ENCODE measurements at regions of chr10 and their contacts with region 1.

Region 1: DNA sequence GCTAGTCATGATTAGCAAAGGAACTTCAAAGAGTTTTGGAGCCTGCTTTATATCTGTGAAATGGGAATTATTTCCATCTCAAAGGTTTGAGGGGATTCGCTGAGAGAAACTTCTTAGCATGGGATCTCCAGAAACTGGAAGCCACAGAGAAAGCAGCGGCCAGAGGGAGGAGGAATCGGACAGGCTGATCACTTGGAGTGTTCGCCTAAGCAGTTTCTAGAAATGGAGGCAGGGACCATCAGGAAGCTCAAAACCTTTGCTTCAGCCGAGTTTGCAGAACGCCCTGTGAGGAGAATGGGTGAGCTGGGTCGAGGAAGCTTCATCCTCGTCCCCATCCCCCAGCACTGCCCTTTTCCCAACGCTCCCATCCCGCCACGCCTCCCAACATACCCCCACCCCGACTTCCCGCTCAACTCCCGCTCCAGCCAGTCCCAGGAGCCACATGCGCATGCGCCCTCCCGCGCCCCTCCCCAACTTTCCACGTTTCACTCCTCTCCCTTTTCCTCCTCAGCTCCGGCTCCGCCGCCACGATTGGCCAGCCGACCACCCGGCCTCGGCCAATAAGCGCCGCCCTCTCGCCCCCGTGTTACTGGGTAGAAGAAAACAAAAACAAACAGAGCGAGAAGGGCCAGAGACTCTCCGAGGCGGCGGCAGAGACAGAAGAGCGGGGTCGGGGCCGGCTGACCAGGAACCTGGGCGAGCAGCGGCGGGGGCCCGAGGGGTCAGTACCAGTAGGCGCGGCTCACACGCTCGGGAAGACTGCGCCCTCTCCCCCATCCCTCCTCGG is at the start of gene PDCD4:
- DNase-seq: peak; percentile 92
- ATAC-seq: peak; percentile 96
- H3K4me3 ChIP-seq: peak within 1 kb of the TSS; percentile 63 to 72
- H3K27ac ChIP-seq: peak within 1 kb of the TSS; percentile 99
- H3K4me1 ChIP-seq: peaks cover 16% of the 10 kb centered on the region
- H3K27me3 ChIP-seq: no peaks in the 10 kb centered on the region
- CTCF ChIP-seq: no peak
- total RNA-seq, gene PDCD4: 33.6 TPM

Region 2: GRCh38 chr10:110556969-110557601 is 314.4 kb before region 1 on chr10:
- CTCF ChIA-PET with region 1: no interaction called
- POLR2A ChIA-PET with region 1: no interaction called
- in situ Hi-C with region 1: no loop called
- intact Hi-C with region 1: no loop called
- DNase-seq: no peak
- ATAC-seq: peak; percentile 85
- H3K4me3 ChIP-seq: no peak overlapping the region
- H3K27ac ChIP-seq: no peak overlapping the region
- H3K4me1 ChIP-seq: no peaks in the 10 kb centered on the region
- H3K27me3 ChIP-seq: no peaks in the 10 kb centered on the region; the same call in 1 of the 2 replicates
- CTCF ChIP-seq: peak; percentile 89

Region 3: DNA sequence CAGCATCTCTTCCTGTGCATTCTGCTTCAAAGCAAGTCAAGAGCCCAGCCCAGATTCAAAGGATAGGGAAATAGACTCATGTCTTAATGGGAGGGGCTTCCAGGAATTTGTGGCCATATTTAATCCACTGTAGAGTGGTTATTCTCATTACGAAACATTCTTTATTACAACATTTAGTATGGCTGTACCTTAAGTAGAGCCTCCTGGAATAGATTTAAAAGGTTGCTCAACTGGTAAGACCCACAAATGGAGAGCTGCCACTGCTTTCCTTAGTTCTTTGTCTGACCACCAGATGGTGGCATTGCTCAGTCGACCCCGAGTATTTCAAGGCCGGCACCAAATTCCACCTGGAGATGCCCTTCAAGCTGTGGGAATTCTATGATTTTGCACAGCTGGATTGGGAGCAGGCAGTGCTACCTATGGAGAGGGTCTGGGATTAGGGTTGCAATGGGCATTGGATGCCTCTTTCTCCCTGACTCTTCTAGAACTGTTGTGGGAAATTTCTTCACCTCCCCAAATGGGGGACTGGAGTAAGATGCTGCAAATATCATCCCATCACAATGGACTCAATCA is 125.2 kb before region 1 on chr10:
- CTCF ChIA-PET with region 1: no interaction called
- POLR2A ChIA-PET with region 1: no interaction called
- in situ Hi-C with region 1: no loop called
- intact Hi-C with region 1: loop called (anchors 5 kb)
- DNase-seq: peak; percentile 72
- ATAC-seq: peak; percentile 93
- H3K4me3 ChIP-seq: no peak overlapping the region
- H3K27ac ChIP-seq: no peak overlapping the region
- H3K4me1 ChIP-seq: peaks cover 3% of the 10 kb centered on the region; the same call in 1 of the 2 replicates
- H3K27me3 ChIP-seq: peaks cover 7% of the 10 kb centered on the region; the same call in 1 of the 2 replicates
- CTCF ChIP-seq: peak; percentile 90

Region 4: DNA sequence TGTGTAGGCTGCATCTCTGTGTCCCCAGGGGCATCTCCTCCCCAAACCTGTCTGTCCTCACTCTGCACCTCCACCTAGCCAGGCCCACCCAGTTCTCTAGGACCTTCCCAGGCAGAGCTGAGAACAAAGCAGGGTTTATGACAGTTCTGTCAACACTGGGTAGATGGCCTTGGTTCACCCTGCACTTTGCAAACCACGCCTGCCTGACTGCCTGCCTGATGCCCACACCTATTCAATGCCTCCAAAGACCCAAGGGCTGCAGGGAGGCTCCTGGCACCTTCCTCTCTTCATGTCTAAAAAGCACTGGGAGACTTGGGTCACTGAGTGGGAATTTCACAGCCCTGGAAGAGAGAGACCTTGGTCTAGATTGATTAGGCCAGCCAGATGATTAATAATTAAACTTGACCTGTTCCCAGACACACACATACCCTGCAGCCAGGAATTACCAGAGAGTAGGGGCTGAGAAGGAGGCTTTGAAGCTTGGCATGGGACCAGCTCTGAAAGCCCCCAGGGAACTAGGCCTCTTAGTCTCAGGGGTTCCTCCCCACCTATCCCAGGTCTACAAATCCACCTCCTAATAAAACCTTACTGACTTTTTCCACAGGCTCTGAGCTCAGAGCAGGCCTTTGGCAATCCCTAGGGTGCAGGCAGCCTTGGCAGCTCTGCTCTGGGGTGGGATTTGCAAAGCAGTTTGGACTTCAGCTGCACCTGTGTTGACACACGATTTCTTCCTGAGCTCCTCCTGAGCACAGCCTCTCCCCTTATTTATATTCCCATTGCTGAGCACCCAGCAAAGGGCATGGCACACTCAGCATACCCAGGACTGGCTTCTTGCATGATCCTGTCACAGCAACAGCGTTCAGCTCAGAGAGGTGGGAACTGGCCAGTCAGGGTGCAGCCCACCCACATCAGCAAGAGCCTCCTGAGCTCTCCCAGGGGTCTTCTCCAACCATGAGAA is 25.5 kb before region 1 on chr10:
- CTCF ChIA-PET with region 1: no interaction called
- POLR2A ChIA-PET with region 1: interaction called, 10 read pairs
- in situ Hi-C with region 1: no loop called
- intact Hi-C with region 1: no loop called
- DNase-seq: no peak
- ATAC-seq: no peak
- H3K4me3 ChIP-seq: no peak overlapping the region
- H3K27ac ChIP-seq: no peak overlapping the region
- H3K4me1 ChIP-seq: no peaks in the 10 kb centered on the region
- H3K27me3 ChIP-seq: no peaks in the 10 kb centered on the region
- CTCF ChIP-seq: no peak

Region 5: GRCh38 chr10:110883924-110884323 is 12.4 kb after region 1 on chr10:
- CTCF ChIA-PET with region 1: interaction called, 4 read pairs
- POLR2A ChIA-PET with region 1: interaction called, 17 read pairs
- in situ Hi-C with region 1: no loop called
- intact Hi-C with region 1: no loop called
- DNase-seq: no peak
- ATAC-seq: peak; percentile 93
- H3K4me3 ChIP-seq: peak overlapping the region; percentile 29 to 43
- H3K27ac ChIP-seq: peak overlapping the region; percentile 75
- H3K4me1 ChIP-seq: peaks cover 11% of the 10 kb centered on the region; the same call in 1 of the 2 replicates
- H3K27me3 ChIP-seq: no peaks in the 10 kb centered on the region
- CTCF ChIP-seq: no peak

Region 6: GRCh38 chr10:110918643-110919363 is 47.3 kb after region 1 on chr10 and contains the start of gene BBIP1:
- CTCF ChIA-PET with region 1: interaction called, 13 read pairs
- POLR2A ChIA-PET with region 1: interaction called, 10 read pairs
- in situ Hi-C with region 1: no loop called
- intact Hi-C with region 1: no loop called
- DNase-seq: peak; percentile 99
- ATAC-seq: peak; percentile 94
- H3K4me3 ChIP-seq: peak within 1 kb of the TSS; percentile 91 to 93
- H3K27ac ChIP-seq: peak within 1 kb of the TSS; percentile 96
- H3K4me1 ChIP-seq: peaks cover 41% of the 10 kb centered on the region
- H3K27me3 ChIP-seq: no peaks in the 10 kb centered on the region
- CTCF ChIP-seq: no peak
- total RNA-seq, gene BBIP1: 55.2 TPM